Activated CD8-positive, alpha-beta T cell treated with anti-CD3 and anti-CD28 coated beads for 36 hours (primary cell): ENCODE measurements at regions of chr19 and their contacts with region 1.

Region 1: DNA sequence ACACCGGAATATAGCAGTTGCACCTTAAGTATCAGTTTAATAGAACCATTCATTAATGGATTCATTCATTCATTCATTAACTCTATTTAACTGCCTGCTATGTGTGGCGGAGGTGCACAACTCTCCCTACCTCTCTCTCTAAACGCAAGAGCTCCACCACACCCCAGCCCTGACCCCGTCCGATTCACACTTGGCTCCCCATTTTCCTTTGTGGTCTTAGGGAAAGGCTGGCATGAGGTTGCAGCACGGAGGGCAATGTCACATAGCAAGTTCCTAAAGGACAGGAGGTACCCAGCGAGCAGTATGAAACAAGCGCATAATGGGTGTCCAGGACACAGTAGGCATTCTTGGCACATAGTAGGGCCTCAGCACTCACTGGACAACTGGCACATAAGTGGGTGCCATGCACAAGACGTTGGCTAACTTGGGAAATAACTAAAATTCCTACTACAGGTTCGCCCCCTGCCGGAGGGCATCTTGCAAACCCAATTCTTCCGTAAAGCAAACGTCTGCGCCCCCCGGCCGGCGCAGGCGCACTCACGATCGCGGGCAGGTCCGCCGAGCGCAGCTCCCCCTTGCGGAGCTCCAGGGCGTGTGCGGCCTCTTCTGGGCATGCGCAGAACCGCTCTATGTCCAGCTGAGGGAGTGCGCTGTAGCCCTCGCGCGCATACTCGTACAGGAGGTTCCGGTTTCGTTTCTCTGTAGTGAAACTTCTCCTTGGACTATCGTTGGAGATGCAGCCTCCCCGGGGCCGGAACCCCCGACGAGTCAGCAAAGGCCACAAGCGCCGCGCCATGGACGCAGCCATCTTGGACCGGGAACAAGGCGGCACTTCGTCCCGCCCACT is at the start of gene SARS2:
- DNase-seq: peak; percentile 92
- ATAC-seq: peak; percentile 80
- H3K4me3 Mint-ChIP-seq: peak within 1 kb of the TSS; percentile 99
- H3K27ac Mint-ChIP-seq: peak within 1 kb of the TSS; percentile 98
- H3K4me1 Mint-ChIP-seq: peaks cover 31% of the 10 kb centered on the region
- H3K27me3 Mint-ChIP-seq: no peaks in the 10 kb centered on the region
- CTCF ChIP-seq: peak; percentile 99
- total RNA-seq, gene SARS2: 43.4 to 48.6 TPM

Region 2: DNA sequence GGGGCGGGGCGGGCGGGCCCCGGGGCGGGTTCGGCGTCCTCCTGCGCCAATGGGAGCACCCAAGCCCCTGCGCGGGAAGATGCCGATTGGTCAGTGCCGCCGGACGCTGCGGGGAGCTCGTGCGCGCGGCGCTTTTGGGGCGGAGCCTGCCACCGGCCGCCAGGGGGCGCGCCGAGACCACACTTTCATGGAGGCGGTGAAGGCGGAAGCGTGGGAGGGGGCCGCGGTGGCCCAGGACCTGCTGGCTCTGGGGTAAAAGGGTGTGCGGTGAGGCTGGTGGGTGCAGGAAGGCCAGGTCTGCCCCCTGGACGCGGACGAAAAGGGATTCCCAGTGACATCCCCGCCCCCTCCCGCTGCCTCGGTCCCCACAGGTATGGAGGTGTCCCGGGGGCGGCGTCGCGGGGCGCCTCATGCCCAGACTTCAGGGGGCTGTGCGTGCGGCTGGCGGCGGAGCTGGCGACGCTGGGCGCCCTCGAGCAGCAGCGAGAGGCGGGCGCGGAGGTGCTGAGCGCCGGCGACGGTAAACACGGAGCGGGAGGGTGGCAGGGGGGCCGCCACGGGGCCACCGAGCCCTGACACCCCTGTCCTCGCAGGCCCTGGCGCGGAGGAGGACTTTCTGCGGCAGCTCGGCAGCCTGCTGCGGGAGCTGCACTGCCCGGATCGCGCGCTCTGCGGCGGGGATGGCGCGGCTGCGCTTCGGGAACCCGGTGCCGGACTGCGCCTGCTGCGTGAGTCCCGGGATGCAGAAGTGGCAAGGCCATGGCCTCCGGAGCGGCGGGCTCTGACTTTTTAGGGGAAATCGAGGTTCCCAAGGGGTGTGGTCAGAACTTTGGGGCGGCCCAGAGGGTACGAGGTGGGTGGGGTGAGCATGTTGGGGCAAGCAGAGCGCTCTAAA is 526.9 kb before region 1 on chr19 and contains the start of gene FAM98C:
- CTCF ChIA-PET with region 1: interaction called, 27 read pairs
- POLR2A ChIA-PET with region 1: no interaction called
- intact Hi-C with region 1: no loop called
- DNase-seq: no peak
- ATAC-seq: peak; percentile 99
- H3K4me3 Mint-ChIP-seq: peak within 1 kb of the TSS; percentile 83
- H3K27ac Mint-ChIP-seq: peak within 1 kb of the TSS; percentile 88
- H3K4me1 Mint-ChIP-seq: peaks cover 9% of the 10 kb centered on the region
- H3K27me3 Mint-ChIP-seq: peaks cover 3% of the 10 kb centered on the region
- CTCF ChIP-seq: peak; percentile 99
- total RNA-seq, gene FAM98C: 11.7 to 12.5 TPM

Region 3: GRCh38 chr19:38729653-38730469 is 200.3 kb before region 1 on chr19:
- CTCF ChIA-PET with region 1: interaction called, 12 read pairs
- POLR2A ChIA-PET with region 1: no interaction called
- intact Hi-C with region 1: loop called (anchors 10 kb)
- DNase-seq: peak; percentile 90
- ATAC-seq: peak; percentile 66
- H3K4me3 Mint-ChIP-seq: no peak overlapping the region
- H3K27ac Mint-ChIP-seq: no peak overlapping the region
- H3K4me1 Mint-ChIP-seq: peaks cover 30% of the 10 kb centered on the region
- H3K27me3 Mint-ChIP-seq: no peaks in the 10 kb centered on the region
- CTCF ChIP-seq: peak; percentile 85

Region 4: GRCh38 chr19:38877781-38878574 is 52.2 kb before region 1 on chr19 and contains the start of gene RINL:
- CTCF ChIA-PET with region 1: interaction called, 17 read pairs
- POLR2A ChIA-PET with region 1: interaction called, 3 read pairs
- intact Hi-C with region 1: no loop called
- DNase-seq: peak; percentile 86
- ATAC-seq: peak; percentile 93
- H3K4me3 Mint-ChIP-seq: peak within 1 kb of the TSS; percentile 95
- H3K27ac Mint-ChIP-seq: peak within 1 kb of the TSS; percentile 98
- H3K4me1 Mint-ChIP-seq: peaks cover 34% of the 10 kb centered on the region
- H3K27me3 Mint-ChIP-seq: no peaks in the 10 kb centered on the region
- CTCF ChIP-seq: no peak
- total RNA-seq, gene RINL: 85.5 to 87.7 TPM

Region 5: DNA sequence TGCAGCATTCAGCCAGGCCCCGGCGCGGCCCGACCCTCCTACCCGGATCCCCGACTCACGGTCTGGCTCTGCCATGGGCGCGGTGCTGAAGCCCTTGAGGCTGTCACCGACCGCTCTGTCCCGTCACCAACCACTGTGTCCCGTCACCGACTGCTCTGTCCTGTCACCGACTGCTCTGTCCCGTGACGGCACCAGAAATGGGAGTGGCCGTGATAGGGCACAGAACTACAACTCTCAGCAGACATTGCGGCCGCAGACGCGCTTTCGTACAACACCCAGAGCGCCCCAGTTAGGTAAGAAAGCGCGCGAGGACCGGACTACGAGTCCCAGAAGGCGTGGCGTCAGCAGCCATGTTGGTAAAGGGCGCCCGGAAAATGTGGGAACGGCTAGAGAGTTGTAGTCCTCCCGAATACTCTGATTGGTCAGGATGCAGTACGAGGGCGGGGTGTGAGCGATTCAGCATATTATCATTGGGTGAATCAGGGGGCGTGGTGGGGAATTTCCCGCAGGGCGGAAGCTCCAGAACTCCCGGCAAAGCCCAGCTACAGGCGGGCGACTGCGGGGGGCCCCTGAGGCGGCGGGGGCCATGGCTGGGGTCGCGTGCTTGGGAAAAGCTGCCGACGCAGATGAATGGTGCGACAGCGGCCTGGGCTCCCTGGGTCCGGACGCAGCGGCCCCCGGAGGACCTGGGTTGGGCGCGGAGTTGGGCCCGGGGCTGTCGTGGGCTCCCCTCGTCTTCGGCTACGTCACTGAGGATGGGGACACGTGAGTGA is 30.5 kb before region 1 on chr19 and contains the starts of genes NFKBIB and SIRT2:
- CTCF ChIA-PET with region 1: interaction called, 23 read pairs
- POLR2A ChIA-PET with region 1: interaction called, 7 read pairs
- intact Hi-C with region 1: no loop called
- DNase-seq: peak; percentile 100
- ATAC-seq: peak; percentile 93
- H3K4me3 Mint-ChIP-seq: peak within 1 kb of the TSS; percentile 84
- H3K27ac Mint-ChIP-seq: peak within 1 kb of the TSS; percentile 93
- H3K4me1 Mint-ChIP-seq: peaks cover 30% of the 10 kb centered on the region
- H3K27me3 Mint-ChIP-seq: no peaks in the 10 kb centered on the region
- CTCF ChIP-seq: no peak
- total RNA-seq, gene NFKBIB: 56.5 to 57.9 TPM
- total RNA-seq, gene SIRT2: 20.0 to 21.5 TPM

Region 6: DNA sequence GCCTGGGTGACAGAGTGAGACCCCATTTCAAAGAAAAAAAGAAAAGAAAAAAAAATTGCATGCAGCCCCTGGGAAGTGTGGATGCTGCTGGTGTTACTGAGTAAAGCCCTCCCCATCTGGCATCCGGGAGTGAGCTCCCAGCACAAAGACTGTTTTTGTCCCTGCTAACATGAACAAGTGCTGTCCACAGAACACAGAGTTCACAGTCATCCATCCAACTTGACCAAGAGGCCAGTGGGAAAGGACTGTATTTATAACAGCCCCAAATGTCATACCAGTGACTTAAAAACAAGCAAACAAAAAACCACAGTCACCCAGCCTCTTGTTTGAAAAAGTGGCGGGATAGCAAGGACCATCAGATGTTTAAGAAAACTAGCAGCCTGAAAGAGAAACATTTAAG is 34.6 kb after region 1 on chr19:
- CTCF ChIA-PET with region 1: interaction called, 10 read pairs
- POLR2A ChIA-PET with region 1: no interaction called
- intact Hi-C with region 1: no loop called
- DNase-seq: no peak
- ATAC-seq: no peak
- H3K4me3 Mint-ChIP-seq: no peak overlapping the region
- H3K27ac Mint-ChIP-seq: no peak overlapping the region
- H3K4me1 Mint-ChIP-seq: no peaks in the 10 kb centered on the region
- H3K27me3 Mint-ChIP-seq: peaks cover 6% of the 10 kb centered on the region
- CTCF ChIP-seq: no peak